Gastrocnemius medialis (tissue), 4 donors: ENCODE measurements at regions of chr14 and their contacts with region 1.

Region 1: DNA sequence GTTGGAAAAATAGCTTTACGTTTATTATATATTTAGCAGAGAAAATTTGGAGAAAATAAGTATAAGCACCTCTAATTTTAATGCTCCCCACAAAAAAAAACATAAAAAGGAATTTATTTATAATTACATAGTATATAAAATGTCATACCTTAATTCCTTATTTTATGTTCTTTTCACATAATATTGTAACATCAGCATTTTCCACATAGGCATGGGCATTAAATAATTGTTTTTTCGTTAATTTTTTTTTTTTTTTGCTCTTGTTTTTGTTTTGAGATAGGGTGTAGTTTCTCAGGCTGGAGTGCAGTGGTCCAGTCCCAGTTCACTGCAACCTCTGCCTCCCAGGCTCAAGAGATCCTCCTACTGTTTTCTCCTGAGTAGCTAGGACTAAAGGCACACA is 329.8 kb upstream of the FOXG1 start:
- DNase-seq: no peak
- ATAC-seq: no peak
- H3K4me3 ChIP-seq: no peak overlapping the region
- H3K27ac ChIP-seq: no peak overlapping the region
- H3K4me1 ChIP-seq: no peaks in the 10 kb centered on the region
- H3K27me3 ChIP-seq: no peaks in the 10 kb centered on the region
- CTCF ChIP-seq: no peak
- POLR2A ChIP-seq: no peak

Region 2: DNA sequence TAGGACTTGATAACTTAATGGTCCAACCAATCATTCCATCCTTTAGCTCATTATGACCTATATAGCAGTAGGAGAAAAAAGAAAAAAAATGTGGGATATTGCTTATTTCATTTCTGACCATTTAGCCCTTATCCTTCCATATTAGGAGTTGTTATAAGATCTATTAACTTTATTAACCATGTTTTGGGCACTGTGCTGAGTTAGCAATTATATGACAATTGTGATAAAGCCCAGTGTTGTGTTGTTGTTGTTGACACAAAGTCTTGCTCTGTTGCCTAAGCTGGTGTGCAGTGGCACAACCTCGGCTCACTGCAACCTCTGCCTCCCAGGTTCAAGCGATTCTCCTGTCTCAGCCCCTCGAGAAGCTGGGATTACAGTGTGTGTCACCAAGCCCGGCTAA is 239.9 kb before region 1 on chr14:
- in situ Hi-C with region 1: no loop called
- intact Hi-C with region 1: loop called (anchors 10 kb)
- DNase-seq: no peak
- ATAC-seq: no peak
- H3K4me3 ChIP-seq: no peak overlapping the region
- H3K27ac ChIP-seq: no peak overlapping the region
- H3K4me1 ChIP-seq: no peaks in the 10 kb centered on the region
- H3K27me3 ChIP-seq: no peaks in the 10 kb centered on the region
- CTCF ChIP-seq: no peak
- POLR2A ChIP-seq: no peak